ENCODE measurements at regions of chr5 and their contacts with region 1.

Region 1: GRCh38 chr5:75053304-75054133 is 1.2 kb upstream of the GCNT4 start:
- DNase-seq: peak; percentile 67
- ATAC-seq: peak; percentile 48
- H3K4me3 Mint-ChIP-seq: peak overlapping the region; percentile 83
- H3K27ac Mint-ChIP-seq: peak overlapping the region; percentile 90
- H3K4me1 Mint-ChIP-seq: peaks cover 75% of the 10 kb centered on the region
- H3K27me3 Mint-ChIP-seq: no peaks in the 10 kb centered on the region

Region 2: GRCh38 chr5:74717596-74717995 is 335.9 kb before region 1 on chr5:
- CTCF ChIA-PET with region 1: no interaction called
- POLR2A ChIA-PET with region 1: no interaction called
- DNase-seq: no peak
- ATAC-seq: no peak
- H3K4me3 Mint-ChIP-seq: no peak overlapping the region
- H3K27ac Mint-ChIP-seq: no peak overlapping the region
- H3K4me1 Mint-ChIP-seq: no peaks in the 10 kb centered on the region
- H3K27me3 Mint-ChIP-seq: no peaks in the 10 kb centered on the region

Region 3: DNA sequence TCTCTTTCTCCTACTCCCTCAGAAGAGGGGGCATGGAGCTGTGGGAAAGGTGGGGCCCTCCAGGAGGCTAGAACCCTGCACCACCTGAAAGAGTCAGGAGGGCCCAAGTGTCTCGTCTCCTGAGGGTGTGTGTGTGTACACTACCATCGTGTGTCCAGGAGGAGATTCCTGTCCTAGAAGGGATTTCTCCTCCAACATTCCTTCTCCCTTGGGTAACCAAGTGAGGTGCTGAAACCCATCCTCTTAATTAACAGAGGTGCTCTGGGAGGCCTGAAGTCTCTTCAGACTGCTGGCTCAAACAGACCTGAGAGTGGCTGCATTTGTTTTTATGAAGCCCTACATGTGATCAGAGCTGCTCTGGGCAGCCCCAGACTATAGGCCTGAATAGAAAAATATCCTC is 126.2 kb before region 1 on chr5:
- CTCF ChIA-PET with region 1: interaction called, 11 read pairs
- POLR2A ChIA-PET with region 1: interaction called, 4 read pairs
- DNase-seq: no peak
- ATAC-seq: no peak
- H3K4me3 Mint-ChIP-seq: no peak overlapping the region
- H3K27ac Mint-ChIP-seq: no peak overlapping the region
- H3K4me1 Mint-ChIP-seq: no peaks in the 10 kb centered on the region
- H3K27me3 Mint-ChIP-seq: peaks cover 4% of the 10 kb centered on the region

Region 4: DNA sequence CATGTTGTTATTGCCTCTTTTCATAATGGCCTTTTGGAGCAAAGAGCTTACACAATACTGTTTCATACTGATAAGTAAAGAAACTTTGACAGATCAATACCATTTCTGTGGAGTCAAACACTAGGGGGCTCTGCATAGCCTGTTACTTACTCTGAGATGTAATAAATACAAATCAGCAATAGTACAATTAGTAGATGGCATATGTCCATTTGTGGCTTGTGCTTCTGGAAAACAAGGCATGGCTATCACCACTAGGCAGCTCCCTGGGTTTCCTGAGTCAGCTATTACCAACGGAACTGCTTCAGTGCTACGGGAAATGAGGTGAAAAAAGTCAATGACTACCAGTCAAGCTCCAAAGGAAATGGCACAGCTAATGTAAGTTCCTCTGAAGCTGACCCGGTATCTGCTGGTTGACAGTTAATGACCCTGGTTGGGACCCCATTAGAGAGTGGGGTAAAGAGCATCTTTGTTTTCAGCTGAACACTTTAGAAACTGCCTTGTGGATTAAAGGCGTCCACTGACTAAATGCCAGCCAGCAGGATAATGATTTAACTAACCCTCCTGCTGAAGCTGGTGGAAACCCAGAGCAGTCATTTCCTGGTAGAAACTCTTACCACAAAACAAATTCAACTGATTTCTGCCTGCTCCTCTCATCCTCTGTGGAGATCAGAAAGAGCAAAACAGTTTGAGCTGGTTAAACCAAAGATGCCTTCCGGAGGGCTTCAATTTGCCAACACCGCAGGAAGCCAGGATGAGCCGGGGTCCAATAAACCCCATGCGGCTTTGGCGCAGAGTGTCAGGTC is 118.4 kb before region 1 on chr5:
- CTCF ChIA-PET with region 1: interaction called, 38 read pairs
- POLR2A ChIA-PET with region 1: interaction called, 7 read pairs
- DNase-seq: peak; percentile 49
- ATAC-seq: peak; percentile 91
- H3K4me3 Mint-ChIP-seq: peak overlapping the region; percentile 63
- H3K27ac Mint-ChIP-seq: peak overlapping the region; percentile 89
- H3K4me1 Mint-ChIP-seq: peaks cover 41% of the 10 kb centered on the region
- H3K27me3 Mint-ChIP-seq: peaks cover 7% of the 10 kb centered on the region

Region 5: DNA sequence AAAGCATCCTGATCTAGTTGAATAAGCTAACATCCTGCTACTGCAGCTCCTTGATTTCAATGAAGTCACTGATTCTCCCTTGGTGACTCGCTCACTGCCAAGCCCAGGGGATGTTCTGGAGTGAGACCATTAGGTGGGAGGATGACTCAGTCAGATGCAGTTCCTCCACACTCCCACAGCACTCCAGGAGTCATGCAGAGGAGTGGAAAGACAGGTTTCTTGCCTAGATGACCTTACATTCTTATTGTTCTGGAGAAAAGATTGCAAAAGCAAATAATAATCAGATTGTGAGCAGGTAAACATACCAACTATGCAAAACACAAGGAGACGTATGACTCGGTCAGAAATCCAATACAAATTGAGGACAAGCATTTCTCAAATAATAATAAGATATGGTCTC is 16.4 kb before region 1 on chr5:
- CTCF ChIA-PET with region 1: interaction called, 32 read pairs
- POLR2A ChIA-PET with region 1: interaction called, 9 read pairs
- DNase-seq: no peak
- ATAC-seq: no peak
- H3K4me3 Mint-ChIP-seq: no peak overlapping the region
- H3K27ac Mint-ChIP-seq: no peak overlapping the region
- H3K4me1 Mint-ChIP-seq: peaks cover 39% of the 10 kb centered on the region
- H3K27me3 Mint-ChIP-seq: no peaks in the 10 kb centered on the region

Region 6: GRCh38 chr5:75078027-75078426 is 24.5 kb after region 1 on chr5:
- CTCF ChIA-PET with region 1: interaction called, 13 read pairs
- POLR2A ChIA-PET with region 1: interaction called, 3 read pairs
- DNase-seq: no peak
- ATAC-seq: no peak
- H3K4me3 Mint-ChIP-seq: no peak overlapping the region
- H3K27ac Mint-ChIP-seq: no peak overlapping the region
- H3K4me1 Mint-ChIP-seq: no peaks in the 10 kb centered on the region
- H3K27me3 Mint-ChIP-seq: no peaks in the 10 kb centered on the region

Region 7: DNA sequence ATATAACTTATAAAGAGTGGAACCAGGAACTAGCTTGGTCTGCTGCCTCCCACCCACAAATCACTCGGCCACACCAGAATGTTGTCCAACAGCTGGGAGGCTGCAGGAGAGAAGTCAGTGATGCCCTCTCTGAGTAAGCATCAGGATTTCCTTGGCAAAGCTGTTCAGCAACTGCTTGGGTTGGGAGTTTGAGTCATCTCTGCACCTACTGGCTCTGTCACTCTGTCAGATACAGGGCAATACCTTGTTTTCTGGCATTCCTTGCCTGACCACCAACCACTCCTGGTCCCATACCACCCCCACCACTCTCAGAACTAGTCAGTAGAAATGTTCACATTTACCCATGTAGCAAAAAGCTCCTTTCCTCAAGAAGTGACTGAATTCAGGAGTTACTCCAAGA is 35.6 kb after region 1 on chr5:
- CTCF ChIA-PET with region 1: interaction called, 10 read pairs
- POLR2A ChIA-PET with region 1: interaction called, 3 read pairs
- DNase-seq: no peak
- ATAC-seq: no peak
- H3K4me3 Mint-ChIP-seq: no peak overlapping the region
- H3K27ac Mint-ChIP-seq: no peak overlapping the region
- H3K4me1 Mint-ChIP-seq: peaks cover 3% of the 10 kb centered on the region
- H3K27me3 Mint-ChIP-seq: no peaks in the 10 kb centered on the region

Region 8: GRCh38 chr5:75336625-75337339 is 283.3 kb after region 1 on chr5 and contains the start of gene HMGCR:
- CTCF ChIA-PET with region 1: interaction called, 10 read pairs
- POLR2A ChIA-PET with region 1: interaction called, 16 read pairs
- DNase-seq: peak; percentile 99
- ATAC-seq: peak; percentile 98
- H3K4me3 Mint-ChIP-seq: no peak within 1 kb of the TSS
- H3K27ac Mint-ChIP-seq: no peak within 1 kb of the TSS
- H3K4me1 Mint-ChIP-seq: peaks cover 34% of the 10 kb centered on the region
- H3K27me3 Mint-ChIP-seq: no peaks in the 10 kb centered on the region
- total RNA-seq, gene HMGCR: 64.1 to 70.5 TPM